Tibial artery (tissue), 4 donors: ENCODE measurements at regions of chr5 and their contacts with region 1.

Region 1: GRCh38 chr5:35180046-35180445 is 50.2 kb downstream of the PRLR start:
- DNase-seq: no peak
- H3K4me3 ChIP-seq: no peak overlapping the region
- H3K27ac ChIP-seq: no peak overlapping the region
- H3K4me1 ChIP-seq: no peaks in the 10 kb centered on the region
- H3K27me3 ChIP-seq: no peaks in the 10 kb centered on the region
- CTCF ChIP-seq: no peak

Region 2: GRCh38 chr5:34669931-34670516 is 510.0 kb before region 1 on chr5:
- intact Hi-C with region 1: no loop called
- DNase-seq: peak in 1 of 2 donors; percentile 69
- H3K4me3 ChIP-seq: peak overlapping the region in 1 of 2 donors; percentile 2
- H3K27ac ChIP-seq: no peak overlapping the region
- H3K4me1 ChIP-seq: peaks cover 0 to 59% (median 17%) of the 10 kb centered on the region in 4 donors
- H3K27me3 ChIP-seq: no peaks in the 10 kb centered on the region
- CTCF ChIP-seq: no peak

Region 3: GRCh38 chr5:35091704-35092103 is 88.3 kb before region 1 on chr5:
- intact Hi-C with region 1: loop called (anchors 2 kb)
- DNase-seq: no peak
- H3K4me3 ChIP-seq: no peak overlapping the region
- H3K27ac ChIP-seq: no peak overlapping the region
- H3K4me1 ChIP-seq: no peaks in the 10 kb centered on the region
- H3K27me3 ChIP-seq: no peaks in the 10 kb centered on the region
- CTCF ChIP-seq: no peak

Region 4: GRCh38 chr5:35202319-35203111 is 22.5 kb after region 1 on chr5:
- intact Hi-C with region 1: no loop called
- DNase-seq: peak in 1 of 2 donors; percentile 53
- H3K4me3 ChIP-seq: no peak overlapping the region
- H3K27ac ChIP-seq: no peak overlapping the region
- H3K4me1 ChIP-seq: peaks cover 0 to 21% (median 10%) of the 10 kb centered on the region in 4 donors
- H3K27me3 ChIP-seq: no peaks in the 10 kb centered on the region
- CTCF ChIP-seq: peak; percentile 18 to 19